IMR-90 (cell line): ENCODE measurements at regions of chr12 and their contacts with region 1.

Region 1: GRCh38 chr12:3202734-3203446 is 125.7 kb downstream of the TSPAN9 start:
- DNase-seq: peak; percentile 34
- ATAC-seq: peak; percentile 30
- H3K4me3 ChIP-seq: no peak overlapping the region
- H3K27ac ChIP-seq: no peak overlapping the region
- H3K4me1 ChIP-seq: peaks cover 8% of the 10 kb centered on the region
- H3K27me3 ChIP-seq: peaks cover 6% of the 10 kb centered on the region
- CTCF ChIP-seq: peak; percentile 86
- POLR2A ChIP-seq: no peak
- RAD21 ChIP-seq: peak; percentile 68

Region 2: DNA sequence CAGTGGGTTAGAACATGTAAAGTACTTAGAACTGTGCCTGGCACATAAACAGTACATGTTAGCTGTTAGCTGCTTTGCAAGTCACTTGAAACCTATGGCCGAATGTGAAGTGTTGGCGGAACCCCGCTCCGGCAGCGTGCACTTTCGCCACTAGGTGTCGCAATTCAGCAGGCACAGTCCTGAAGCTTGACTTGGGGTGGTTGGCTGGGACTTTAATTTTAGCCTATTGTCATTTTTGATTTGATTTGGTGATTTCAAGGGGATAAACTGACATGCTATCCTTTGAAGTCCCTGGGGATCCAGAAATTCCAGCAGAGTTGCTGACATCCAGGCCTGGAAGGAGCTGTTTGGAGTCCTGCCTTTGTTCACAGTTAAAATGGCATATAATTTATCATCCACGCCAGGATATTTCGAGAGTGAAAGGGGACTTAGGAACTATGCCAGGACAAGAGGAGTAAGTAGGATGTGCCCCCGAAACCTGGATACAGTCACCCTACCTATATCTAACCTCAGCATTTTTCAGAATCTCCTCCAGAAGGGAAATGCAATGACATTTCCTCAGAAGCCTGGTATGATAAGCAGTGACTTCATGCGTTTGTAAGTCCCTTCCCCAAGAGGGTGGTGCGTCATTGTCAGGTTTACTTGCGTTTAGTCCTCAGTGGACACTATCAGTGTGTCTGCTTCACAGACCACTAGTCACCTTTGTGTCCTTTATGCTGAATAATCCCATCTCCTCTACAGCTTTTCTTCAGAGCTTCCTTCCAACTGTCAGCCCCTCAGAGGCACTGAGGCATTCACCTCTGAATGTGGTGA is 129.2 kb before region 1 on chr12:
- CTCF ChIA-PET with region 1: interaction called, 5 read pairs
- POLR2A ChIA-PET with region 1: no interaction called
- dilution Hi-C with region 1: no loop called
- in situ Hi-C with region 1: no loop called
- intact Hi-C with region 1: loop called (anchors 1 kb)
- DNase-seq: peak; percentile 92
- ATAC-seq: peak; percentile 32
- H3K4me3 ChIP-seq: no peak overlapping the region
- H3K27ac ChIP-seq: no peak overlapping the region
- H3K4me1 ChIP-seq: peaks cover 14% of the 10 kb centered on the region
- H3K27me3 ChIP-seq: peaks cover 5% of the 10 kb centered on the region; the same call in 1 of the 2 replicates
- CTCF ChIP-seq: peak; percentile 97
- POLR2A ChIP-seq: no peak
- RAD21 ChIP-seq: peak; percentile 95

Region 3: DNA sequence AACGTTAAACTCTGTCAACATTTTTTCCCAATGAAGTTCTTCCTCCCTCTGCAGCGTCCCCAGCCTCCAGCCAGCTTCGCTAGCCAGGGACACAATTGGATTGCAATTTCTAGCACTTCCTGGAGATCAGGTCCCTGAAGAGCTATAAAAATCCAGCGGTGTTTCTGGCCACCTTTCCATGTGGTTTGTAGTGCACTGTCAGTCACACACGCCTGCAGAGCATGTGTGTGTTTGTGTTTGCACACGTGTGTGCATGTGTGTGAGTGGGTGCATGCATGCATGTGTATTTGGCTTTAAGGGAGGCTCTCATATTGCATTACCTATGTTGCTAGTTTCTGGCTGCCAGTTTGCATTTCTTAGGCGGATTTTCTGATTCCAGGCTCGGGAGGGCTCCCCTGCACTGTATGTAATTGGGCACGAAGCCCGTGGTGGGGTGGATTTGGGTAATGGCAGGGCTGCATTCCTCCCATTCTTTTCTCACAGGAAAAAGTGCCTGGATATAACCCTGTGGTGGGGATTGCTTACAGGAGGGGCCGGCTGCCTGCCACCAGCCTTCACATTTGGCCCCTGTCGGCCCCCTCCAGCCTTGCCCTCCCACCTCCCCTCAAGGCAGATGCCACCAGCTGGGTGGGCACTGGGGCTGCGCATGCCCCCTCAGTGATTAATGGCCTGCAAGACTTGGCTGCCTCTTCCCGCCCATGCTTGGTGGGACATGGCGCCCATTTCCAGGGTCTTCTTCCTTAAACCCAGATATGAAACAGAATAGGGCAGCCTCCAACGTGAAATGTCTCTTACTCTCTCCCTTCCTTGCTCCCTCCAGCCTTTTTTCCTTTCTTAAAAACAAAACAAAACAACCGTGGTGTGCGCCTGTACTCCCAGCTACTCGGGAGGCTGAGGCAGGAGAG is 51.7 kb before region 1 on chr12:
- CTCF ChIA-PET with region 1: interaction called, 3 read pairs
- POLR2A ChIA-PET with region 1: no interaction called
- dilution Hi-C with region 1: no loop called
- in situ Hi-C with region 1: no loop called
- intact Hi-C with region 1: loop called (anchors 5 kb)
- DNase-seq: peak; percentile 48
- ATAC-seq: peak; percentile 87
- H3K4me3 ChIP-seq: no peak overlapping the region
- H3K27ac ChIP-seq: no peak overlapping the region
- H3K4me1 ChIP-seq: peaks cover 17% of the 10 kb centered on the region
- H3K27me3 ChIP-seq: no peaks in the 10 kb centered on the region
- CTCF ChIP-seq: no peak
- POLR2A ChIP-seq: no peak
- RAD21 ChIP-seq: no peak

Region 4: DNA sequence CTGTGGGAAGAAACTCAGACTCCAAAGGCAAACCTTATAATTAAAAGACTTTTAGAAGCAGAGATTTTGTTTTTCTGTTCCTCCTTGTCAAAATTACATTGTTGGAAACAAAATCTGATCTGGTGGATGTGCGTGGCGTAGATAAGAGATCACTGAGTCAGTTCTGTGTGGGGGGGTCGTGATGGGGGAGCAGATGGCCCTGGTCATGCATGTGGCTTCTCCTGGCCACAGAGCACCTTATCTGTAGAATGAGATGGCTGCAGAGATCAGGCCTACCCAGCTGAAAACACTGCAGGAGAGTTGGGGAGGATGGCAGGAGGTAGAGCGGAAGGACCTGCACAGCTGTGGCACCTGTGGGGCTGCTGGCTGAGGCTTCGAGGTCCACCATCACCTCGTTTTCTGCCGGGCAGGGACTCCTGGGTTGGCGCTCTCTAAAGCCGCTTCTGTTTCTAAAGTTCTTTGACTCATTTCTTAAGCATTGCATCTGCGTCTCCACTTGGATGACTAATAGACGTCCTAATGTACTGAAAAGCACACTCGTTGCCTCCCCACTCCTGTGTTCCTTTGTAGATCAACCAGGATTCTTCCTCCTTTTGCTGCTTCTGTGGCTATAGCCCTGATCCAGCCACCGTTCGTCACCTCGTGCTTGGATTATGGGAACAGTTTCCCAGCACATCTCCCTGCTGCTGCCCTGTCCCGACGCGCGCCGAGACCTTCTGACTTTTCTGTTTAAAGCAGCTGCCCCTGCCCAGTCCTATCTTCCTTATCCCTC is 32.3 kb before region 1 on chr12:
- CTCF ChIA-PET with region 1: interaction called, 3 read pairs
- POLR2A ChIA-PET with region 1: no interaction called
- dilution Hi-C with region 1: no loop called
- in situ Hi-C with region 1: no loop called
- intact Hi-C with region 1: loop called (anchors 2 kb)
- DNase-seq: peak; percentile 97
- ATAC-seq: peak; percentile 81
- H3K4me3 ChIP-seq: no peak overlapping the region
- H3K27ac ChIP-seq: peak overlapping the region; percentile 92
- H3K4me1 ChIP-seq: peaks cover 39% of the 10 kb centered on the region
- H3K27me3 ChIP-seq: no peaks in the 10 kb centered on the region
- CTCF ChIP-seq: no peak
- POLR2A ChIP-seq: peak; percentile 81
- RAD21 ChIP-seq: no peak

Region 5: GRCh38 chr12:3275171-3276041 is 72.5 kb after region 1 on chr12:
- CTCF ChIA-PET with region 1: interaction called, 3 read pairs
- POLR2A ChIA-PET with region 1: no interaction called
- dilution Hi-C with region 1: no loop called
- in situ Hi-C with region 1: no loop called
- intact Hi-C with region 1: loop called (anchors 5 kb)
- DNase-seq: peak; percentile 66
- ATAC-seq: peak; percentile 89
- H3K4me3 ChIP-seq: no peak overlapping the region
- H3K27ac ChIP-seq: no peak overlapping the region
- H3K4me1 ChIP-seq: 0 out of 2 replicates have a peak, but pooled peaks cover 2% of the 10 kb centered on the region
- H3K27me3 ChIP-seq: no peaks in the 10 kb centered on the region
- CTCF ChIP-seq: peak; percentile 98
- POLR2A ChIP-seq: peak; percentile 52; the same call in 1 of the 2 replicates
- RAD21 ChIP-seq: peak; percentile 98